MCF 10A (cell line): ENCODE measurements at regions of chr16 and their contacts with region 1.

Region 1: GRCh38 chr16:89922884-89923690 is at the start of gene TUBB3:
- DNase-seq: peak; percentile 73
- H3K4me3 Mint-ChIP-seq: peak within 1 kb of the TSS; percentile 74
- H3K27ac Mint-ChIP-seq: peak within 1 kb of the TSS; percentile 76
- H3K4me1 Mint-ChIP-seq: peaks cover 13% of the 10 kb centered on the region
- H3K27me3 Mint-ChIP-seq: no peaks in the 10 kb centered on the region
- CTCF ChIP-seq: no peak
- total RNA-seq, gene TUBB3: 20.2 and 23.0 TPM in 2 replicates

Region 2: GRCh38 chr16:89887243-89887642 is 35.8 kb before region 1 on chr16:
- CTCF ChIA-PET with region 1: no interaction called
- POLR2A ChIA-PET with region 1: no interaction called
- intact Hi-C with region 1: no loop called
- DNase-seq: no peak
- H3K4me3 Mint-ChIP-seq: no peak overlapping the region
- H3K27ac Mint-ChIP-seq: no peak overlapping the region
- H3K4me1 Mint-ChIP-seq: no peaks in the 10 kb centered on the region
- H3K27me3 Mint-ChIP-seq: no peaks in the 10 kb centered on the region
- CTCF ChIP-seq: no peak

Region 3: GRCh38 chr16:89909777-89910716 is 13.0 kb before region 1 on chr16:
- CTCF ChIA-PET with region 1: no interaction called
- POLR2A ChIA-PET with region 1: interaction called, 11 read pairs
- intact Hi-C with region 1: no loop called
- DNase-seq: peak; percentile 68
- H3K4me3 Mint-ChIP-seq: no peak overlapping the region
- H3K27ac Mint-ChIP-seq: no peak overlapping the region
- H3K4me1 Mint-ChIP-seq: no peaks in the 10 kb centered on the region
- H3K27me3 Mint-ChIP-seq: no peaks in the 10 kb centered on the region
- CTCF ChIP-seq: peak; percentile 86

Region 4: DNA sequence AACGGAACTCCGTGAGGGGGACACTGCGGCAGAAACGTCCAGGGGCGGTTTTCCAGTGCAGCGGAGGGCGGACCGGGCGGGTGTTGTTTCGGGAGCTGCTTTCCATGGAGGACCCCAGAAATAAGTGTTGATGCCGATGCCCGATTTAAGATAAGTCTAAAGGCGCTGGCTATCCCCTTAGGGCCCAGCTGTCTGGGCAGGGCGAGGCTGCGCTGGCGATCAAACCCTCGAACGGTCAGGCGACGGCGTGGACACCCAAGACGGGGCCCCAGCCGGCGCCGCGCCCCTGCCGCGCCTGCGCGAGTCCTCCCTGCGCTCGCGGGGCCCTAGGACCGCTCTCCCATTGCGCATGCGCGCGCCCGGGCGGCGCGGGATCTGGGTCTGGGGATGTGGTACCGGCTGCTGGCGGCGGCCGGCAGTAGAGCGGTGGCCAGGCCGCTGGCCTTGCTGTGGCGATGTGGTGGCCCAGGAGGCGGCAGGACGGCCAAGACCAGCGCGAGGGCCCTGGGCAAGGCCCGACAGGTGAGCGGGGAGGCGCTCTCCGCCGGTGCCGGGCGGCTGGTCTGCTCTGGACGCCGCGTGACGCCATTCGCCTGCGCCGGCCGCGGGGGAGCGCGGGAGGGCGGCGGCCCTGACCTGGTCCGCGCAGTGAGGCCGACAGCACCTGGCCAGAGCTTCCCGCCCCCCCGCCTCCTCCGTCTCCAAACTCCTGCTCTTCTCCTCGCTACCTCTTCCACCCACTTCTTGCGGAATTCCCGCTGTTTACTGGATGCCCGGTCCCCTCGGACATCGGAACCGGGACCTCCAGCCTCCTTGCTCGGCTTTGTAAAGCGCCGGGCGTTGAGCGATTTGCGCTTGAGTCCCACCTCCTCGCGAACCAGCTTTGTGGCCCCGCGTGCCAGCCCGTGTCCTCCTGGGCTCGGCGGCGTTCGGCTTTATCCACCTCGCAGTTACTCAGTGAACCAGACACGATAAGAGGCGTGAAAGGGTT is 49.5 kb after region 1 on chr16:
- CTCF ChIA-PET with region 1: no interaction called
- POLR2A ChIA-PET with region 1: interaction called, 12 read pairs
- intact Hi-C with region 1: loop called (anchors 1 kb)
- DNase-seq: peak; percentile 95
- H3K4me3 Mint-ChIP-seq: peak overlapping the region; percentile 89
- H3K27ac Mint-ChIP-seq: peak overlapping the region; percentile 57
- H3K4me1 Mint-ChIP-seq: peaks cover 12% of the 10 kb centered on the region
- H3K27me3 Mint-ChIP-seq: no peaks in the 10 kb centered on the region
- CTCF ChIP-seq: no peak